PC-3 (cell line): ENCODE measurements at regions of chr6 and their contacts with region 1.

Region 1: GRCh38 chr6:137873273-137873762 is 6.3 kb downstream of the TNFAIP3 start:
- DNase-seq: peak; percentile 48
- ATAC-seq: peak; percentile 78
- H3K4me3 ChIP-seq: no peak overlapping the region
- H3K27ac ChIP-seq: no peak overlapping the region
- H3K4me1 ChIP-seq: peaks cover 39% of the 10 kb centered on the region
- H3K27me3 ChIP-seq: no peaks in the 10 kb centered on the region
- CTCF ChIP-seq: no peak

Region 2: GRCh38 chr6:137625796-137626195 is 247.5 kb before region 1 on chr6:
- CTCF ChIA-PET with region 1: no interaction called
- POLR2A ChIA-PET with region 1: no interaction called
- intact Hi-C with region 1: no loop called
- DNase-seq: no peak
- ATAC-seq: no peak
- H3K4me3 ChIP-seq: no peak overlapping the region
- H3K27ac ChIP-seq: no peak overlapping the region
- H3K4me1 ChIP-seq: no peaks in the 10 kb centered on the region
- H3K27me3 ChIP-seq: peaks cover 19% of the 10 kb centered on the region
- CTCF ChIP-seq: no peak; the same call in 1 of the 2 replicates

Region 3: GRCh38 chr6:137927777-137928218 is 54.5 kb after region 1 on chr6:
- CTCF ChIA-PET with region 1: no interaction called
- POLR2A ChIA-PET with region 1: no interaction called
- intact Hi-C with region 1: loop called (anchors 5 kb)
- DNase-seq: no peak
- ATAC-seq: no peak
- H3K4me3 ChIP-seq: no peak overlapping the region
- H3K27ac ChIP-seq: no peak overlapping the region
- H3K4me1 ChIP-seq: peaks cover 39% of the 10 kb centered on the region
- H3K27me3 ChIP-seq: no peaks in the 10 kb centered on the region
- CTCF ChIP-seq: no peak